ENCODE measurements at regions of chr7 and their contacts with region 1.

Region 1: DNA sequence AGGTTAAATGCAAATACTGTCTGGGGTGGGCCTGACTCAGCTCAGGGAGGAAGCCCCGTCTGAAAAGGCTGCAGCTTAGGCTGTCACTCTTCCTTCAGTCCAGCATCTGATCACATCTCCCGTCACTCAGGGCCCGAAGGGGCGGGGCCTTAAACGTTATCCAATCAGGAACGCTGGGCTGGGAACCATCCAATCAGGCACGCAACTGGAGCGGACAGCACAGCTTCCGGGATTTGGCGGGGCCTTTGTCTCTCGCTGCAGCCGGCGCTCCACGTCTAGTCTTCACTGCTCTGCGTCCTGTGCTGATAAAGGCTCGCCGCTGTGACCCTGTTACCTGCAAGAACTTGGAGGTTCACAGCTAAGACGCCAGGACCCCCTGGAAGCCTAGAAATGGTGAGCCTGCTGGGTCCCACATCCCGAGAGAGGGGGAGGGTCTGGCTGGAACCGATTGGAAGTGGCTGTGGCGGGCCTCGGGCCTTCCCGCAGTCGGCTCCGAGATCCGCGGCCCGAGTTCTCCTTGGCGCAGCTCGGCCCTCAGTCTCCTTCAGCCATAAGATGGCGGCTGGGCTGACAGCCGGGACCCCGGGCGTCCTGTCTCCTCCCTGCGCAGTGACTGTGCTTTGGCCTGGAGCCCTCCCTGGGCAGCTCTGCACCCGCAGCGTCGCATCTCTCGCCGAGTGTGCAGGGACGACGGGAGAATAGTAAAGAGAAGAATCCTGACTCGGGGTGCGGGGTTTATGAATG is at the start of gene ZNF92:
- DNase-seq: peak; percentile 95 to 96
- ATAC-seq: peak; percentile 100
- H3K4me3 ChIP-seq: peak within 1 kb of the TSS; percentile 91 to 97 (median 96)
- H3K27ac ChIP-seq: peak within 1 kb of the TSS; percentile 87 to 89 (median 88)
- H3K4me1 ChIP-seq: peaks cover 10 to 14% of the 10 kb centered on the region in 2 donors
- H3K27me3 ChIP-seq: no peaks in the 10 kb centered on the region
- CTCF ChIP-seq: no peak
- POLR2A ChIP-seq: peak; percentile 69 to 88
- total RNA-seq, gene ZNF92: 1.8 to 3.4 (median 2.6) TPM

Region 2: DNA sequence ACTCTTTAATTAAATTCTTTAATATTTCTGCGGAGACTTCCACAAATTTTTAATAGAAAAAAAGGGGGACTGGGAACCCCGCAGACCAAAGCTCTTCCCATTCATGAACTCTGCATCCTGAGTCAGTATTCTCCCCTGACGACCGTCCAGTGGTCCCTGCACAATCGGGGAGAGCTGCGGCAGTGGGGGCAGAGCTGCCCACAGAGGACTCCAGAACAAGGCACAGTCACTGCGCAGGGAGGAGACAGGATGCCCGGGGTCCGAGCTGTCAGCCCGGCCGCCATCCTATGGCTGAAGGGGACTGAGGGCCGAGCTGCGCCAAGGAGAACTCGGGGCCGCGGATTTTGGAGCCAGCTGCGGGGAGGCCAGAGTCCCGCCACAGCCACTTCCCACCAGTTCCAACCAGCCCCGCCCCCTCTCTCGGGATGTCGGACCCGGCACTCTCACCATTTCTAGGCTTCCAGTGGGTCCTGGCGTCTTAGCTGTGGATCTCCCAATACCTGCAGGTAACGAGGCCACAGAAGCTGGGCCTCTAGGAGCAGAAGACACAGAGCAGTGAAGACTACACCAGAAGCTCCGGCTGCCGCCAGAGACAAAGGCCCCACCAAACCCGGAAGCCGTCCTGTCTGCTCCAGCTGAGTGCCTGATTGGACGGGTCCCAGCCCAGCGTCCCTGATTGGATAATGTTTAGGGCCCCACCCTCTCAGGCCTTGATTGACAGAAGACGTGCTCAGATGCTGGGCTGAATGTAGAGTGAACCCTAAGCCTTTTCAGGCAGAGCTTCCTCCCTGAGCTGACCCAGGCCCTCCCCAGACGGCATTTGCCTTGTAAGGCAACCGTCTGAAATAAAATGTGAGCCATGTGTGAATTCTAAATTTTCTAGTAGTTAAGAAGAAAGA is 367.4 kb before region 1 on chr7 and contains the start of gene ERV3-1:
- in situ Hi-C with region 1: no loop called
- intact Hi-C with region 1: loop called (anchors 10 kb)
- DNase-seq: peak; percentile 95
- ATAC-seq: peak; percentile 100
- H3K4me3 ChIP-seq: peak within 1 kb of the TSS; percentile 55 to 98 (median 91)
- H3K27ac ChIP-seq: peak within 1 kb of the TSS; percentile 76 to 89 (median 86)
- H3K4me1 ChIP-seq: peaks cover 12 to 18% of the 10 kb centered on the region in 2 donors
- H3K27me3 ChIP-seq: no peaks in the 10 kb centered on the region
- CTCF ChIP-seq: no peak
- POLR2A ChIP-seq: peak; percentile 89 to 90
- total RNA-seq, gene ERV3-1: 0.49 to 3.9 (median 2.9) TPM